Endothelial cell of umbilical vein (primary cell): ENCODE measurements at regions of chr22 and their contacts with region 1.

Region 1: GRCh38 chr22:31530823-31531195 is 34.5 kb downstream of the SFI1 start:
- DNase-seq: no peak
- H3K4me3 ChIP-seq: no peak overlapping the region
- H3K27ac ChIP-seq: peak overlapping the region; percentile 78
- H3K4me1 ChIP-seq: peaks cover 10% of the 10 kb centered on the region
- H3K27me3 ChIP-seq: no peaks in the 10 kb centered on the region
- CTCF ChIP-seq: no peak
- POLR2A ChIP-seq: no peak

Region 2: GRCh38 chr22:31489604-31490495 is 41.0 kb before region 1 on chr22 and contains the start of gene EIF4ENIF1:
- CTCF ChIA-PET with region 1: no interaction called
- POLR2A ChIA-PET with region 1: no interaction called
- dilution Hi-C with region 1: no loop called
- intact Hi-C with region 1: loop called (anchors 2 kb)
- DNase-seq: peak; percentile 86
- H3K4me3 ChIP-seq: peak within 1 kb of the TSS; percentile 85 to 96 (median 87)
- H3K27ac ChIP-seq: peak within 1 kb of the TSS; percentile 84
- H3K4me1 ChIP-seq: peaks cover 24% of the 10 kb centered on the region
- H3K27me3 ChIP-seq: no peaks in the 10 kb centered on the region
- CTCF ChIP-seq: no peak
- POLR2A ChIP-seq: peak; percentile 6
- total RNA-seq, gene EIF4ENIF1: 36.6 and 38.7 TPM in 2 replicates

Region 3: GRCh38 chr22:31496007-31496734 is 34.6 kb before region 1 on chr22 and contains the start of gene SFI1:
- CTCF ChIA-PET with region 1: no interaction called
- POLR2A ChIA-PET with region 1: no interaction called
- dilution Hi-C with region 1: no loop called
- intact Hi-C with region 1: loop called (anchors 2 kb)
- DNase-seq: peak; percentile 92
- H3K4me3 ChIP-seq: peak within 1 kb of the TSS; percentile 60 to 85 (median 81)
- H3K27ac ChIP-seq: peak within 1 kb of the TSS; percentile 52
- H3K4me1 ChIP-seq: peaks cover 14% of the 10 kb centered on the region
- H3K27me3 ChIP-seq: no peaks in the 10 kb centered on the region
- CTCF ChIP-seq: peak; percentile 11 to 38
- POLR2A ChIP-seq: peak; percentile 16
- total RNA-seq, gene SFI1: 38.3 and 46.4 TPM in 2 replicates